K562 (cell line): ENCODE measurements at regions of chr6 and their contacts with region 1.

Region 1: DNA sequence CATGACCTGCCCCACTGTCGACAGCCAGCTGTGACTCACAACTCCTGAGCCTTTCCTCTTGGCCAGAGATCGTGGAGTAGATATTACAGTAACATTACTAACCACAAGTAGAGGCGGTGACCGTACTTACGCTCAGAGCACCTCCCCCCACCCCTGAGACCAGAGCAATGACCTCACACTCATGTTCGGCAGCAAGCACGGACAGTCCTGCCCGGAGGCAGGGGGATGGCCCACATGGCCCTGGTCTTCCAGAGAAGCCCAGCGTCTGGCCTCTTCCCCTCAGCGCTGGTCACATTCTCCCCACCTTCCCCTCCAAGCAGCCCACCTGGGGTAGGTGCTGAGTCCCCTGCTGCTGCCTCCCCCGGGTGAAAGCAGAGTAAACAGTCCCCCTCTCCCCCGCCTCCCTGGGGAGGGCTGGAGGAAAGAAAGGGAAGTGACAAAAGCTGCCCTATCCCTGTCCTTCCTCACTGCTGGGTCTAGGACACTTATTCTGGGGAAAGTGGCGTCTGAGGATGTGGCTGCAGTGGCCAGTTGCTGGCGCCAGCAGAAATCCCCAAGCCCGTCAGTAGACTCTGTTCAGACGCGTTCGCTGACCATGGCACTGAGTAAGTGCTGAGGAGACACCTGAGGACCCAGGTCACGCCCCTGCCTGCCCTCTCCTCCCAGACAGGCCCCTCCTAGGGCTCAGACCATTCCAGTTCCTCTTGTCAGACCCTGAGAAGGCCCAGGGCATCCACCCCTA is 68.5 kb downstream of the MRPL14 start:
- DNase-seq: peak; percentile 96 to 99 (median 98)
- ATAC-seq: peak; percentile 93
- H3K4me3 ChIP-seq: peak overlapping the region; percentile 21; the same call in 1 of the 2 replicates
- H3K27ac ChIP-seq: peak overlapping the region; percentile 97
- H3K4me1 ChIP-seq: peaks cover 52 to 63% of the 10 kb centered on the region in 2 experiments
- H3K27me3 ChIP-seq: no peaks in the 10 kb centered on the region
- CTCF ChIP-seq: peak in 1 of 3 experiments; percentile 19; a peak in 2 of 6 replicates
- EP300 ChIP-seq: peak; percentile 92
- POLR2A ChIP-seq: peak; percentile 87
- RAD21 ChIP-seq: peak; percentile 10 to 40; a peak in 1 of 4 replicates

Region 2: DNA sequence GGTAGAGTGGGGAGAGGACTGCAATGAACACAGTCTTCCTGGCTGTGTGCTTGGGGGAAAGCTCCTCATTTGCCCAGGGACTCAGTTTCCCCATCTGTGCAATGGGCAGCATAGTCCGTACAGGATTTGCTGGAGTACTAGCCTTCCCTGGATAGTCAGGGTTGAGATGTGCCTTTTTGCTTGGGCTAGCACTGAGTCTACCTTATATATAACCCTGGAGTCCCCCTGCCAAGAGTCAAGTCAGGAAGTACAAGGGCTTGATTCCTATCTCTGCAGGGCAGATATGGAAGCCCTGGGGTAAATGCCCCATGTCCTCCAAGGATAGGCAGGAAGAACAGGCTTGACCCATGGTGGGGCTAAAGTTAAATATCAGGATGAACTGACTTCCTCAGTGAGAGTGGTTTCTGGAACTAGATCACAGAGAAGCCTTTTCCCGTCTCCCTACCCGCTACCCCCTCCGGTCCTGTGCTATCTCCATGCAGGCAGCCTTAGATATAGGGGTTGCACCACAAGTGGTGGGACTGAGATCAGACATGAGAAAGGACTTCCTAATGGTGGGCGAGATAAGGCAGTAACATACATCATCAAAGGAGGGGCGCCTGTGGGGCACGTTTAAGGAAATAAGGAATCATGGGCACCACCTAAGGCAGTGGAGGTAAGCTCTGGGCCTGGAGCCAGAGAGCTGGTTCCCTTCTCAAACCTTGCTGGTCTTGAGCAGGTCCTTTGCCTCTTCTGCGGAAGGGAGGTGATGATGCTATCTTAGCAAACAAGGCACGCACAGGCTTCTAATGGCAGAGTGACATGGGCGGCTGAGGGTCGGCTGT is 89.4 kb before region 1 on chr6:
- CTCF ChIA-PET with region 1: no interaction called
- POLR2A ChIA-PET with region 1: interaction called, 3 read pairs
- in situ Hi-C with region 1: no loop called
- intact Hi-C with region 1: loop called (anchors 1 kb)
- DNase-seq: peak; percentile 87 to 93 (median 88)
- ATAC-seq: peak; percentile 60
- H3K4me3 ChIP-seq: no peak overlapping the region
- H3K27ac ChIP-seq: peak overlapping the region; percentile 74
- H3K4me1 ChIP-seq: peaks cover 59 to 86% of the 10 kb centered on the region in 2 experiments
- H3K27me3 ChIP-seq: no peaks in the 10 kb centered on the region
- CTCF ChIP-seq: peak in 1 of 3 experiments; percentile 7; a peak in 1 of 6 replicates
- EP300 ChIP-seq: peak; percentile 94; the same call in 1 of the 2 replicates
- POLR2A ChIP-seq: no peak
- RAD21 ChIP-seq: peak; percentile 29 to 33

Region 3: DNA sequence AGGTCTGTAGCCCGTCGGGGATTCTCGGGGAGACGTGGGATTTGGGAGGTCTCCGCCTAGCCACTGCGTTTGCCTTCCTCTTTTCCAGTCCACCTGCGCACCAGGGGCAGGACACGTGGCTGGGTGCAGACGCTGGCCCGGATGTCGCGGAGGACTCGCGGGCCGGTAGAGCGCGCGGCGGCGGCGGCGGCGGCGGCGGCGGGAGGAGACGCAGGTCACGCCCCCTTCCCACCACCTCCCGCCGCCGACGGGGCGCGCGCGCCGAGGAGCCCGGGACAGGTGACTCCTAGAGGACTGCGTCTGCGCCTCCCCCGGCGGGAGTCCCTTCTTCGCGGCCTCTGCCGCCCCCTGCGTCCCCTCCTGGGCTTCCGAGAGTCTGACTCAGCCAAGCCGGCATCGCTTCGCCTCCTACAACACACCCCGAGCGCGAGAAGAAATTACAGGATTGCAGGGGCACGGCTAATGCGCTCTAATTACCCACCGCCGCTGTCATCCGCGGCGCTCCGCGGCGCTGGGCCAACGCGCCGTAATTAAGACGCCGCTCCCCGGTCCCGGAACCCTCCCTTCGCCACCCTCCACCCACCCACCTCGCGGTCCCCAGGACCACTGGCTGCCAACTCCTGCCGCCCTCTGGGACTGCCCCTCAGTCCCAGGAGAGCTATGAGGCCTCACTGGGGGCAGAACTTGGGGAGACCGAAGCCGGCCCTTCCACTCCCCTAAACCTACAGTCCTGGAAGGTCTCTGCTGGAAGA is 56.0 kb before region 1 on chr6:
- CTCF ChIA-PET with region 1: no interaction called
- POLR2A ChIA-PET with region 1: no interaction called
- in situ Hi-C with region 1: no loop called
- intact Hi-C with region 1: loop called (anchors 2 kb)
- DNase-seq: no peak
- ATAC-seq: no peak
- H3K4me3 ChIP-seq: no peak overlapping the region
- H3K27ac ChIP-seq: no peak overlapping the region
- H3K4me1 ChIP-seq: peaks cover 27 to 31% of the 10 kb centered on the region in 2 experiments
- H3K27me3 ChIP-seq: no peaks in the 10 kb centered on the region
- CTCF ChIP-seq: no peak
- EP300 ChIP-seq: no peak
- POLR2A ChIP-seq: no peak
- RAD21 ChIP-seq: no peak

Region 4: DNA sequence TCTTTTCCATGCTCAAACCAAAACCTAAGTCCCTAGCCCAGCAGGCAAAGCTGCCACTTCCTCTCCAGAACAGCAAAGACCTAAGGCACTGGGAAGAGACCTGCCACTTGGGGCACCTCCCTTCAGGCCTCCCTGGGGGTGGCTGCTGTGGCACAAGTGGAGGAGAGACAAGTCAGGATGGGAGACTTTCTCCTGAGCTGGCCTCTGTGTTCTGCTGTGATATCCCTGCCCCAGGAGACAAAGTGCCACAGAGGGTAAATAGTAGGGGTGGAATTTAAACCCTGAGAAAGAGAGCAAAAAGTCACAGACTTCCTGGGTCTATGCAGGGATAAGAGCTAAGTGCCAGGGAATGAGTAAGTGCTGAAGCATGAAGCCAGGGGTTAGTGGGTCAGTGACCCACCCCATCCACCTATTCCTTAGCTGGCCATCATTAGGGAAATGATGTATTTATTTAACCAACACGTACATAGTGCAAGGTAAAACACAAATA is 15.8 kb before region 1 on chr6:
- CTCF ChIA-PET with region 1: no interaction called
- POLR2A ChIA-PET with region 1: interaction called, 16 read pairs
- in situ Hi-C with region 1: no loop called
- intact Hi-C with region 1: loop called (anchors 1 kb)
- DNase-seq: no peak
- ATAC-seq: no peak
- H3K4me3 ChIP-seq: no peak overlapping the region
- H3K27ac ChIP-seq: peak overlapping the region; percentile 80
- H3K4me1 ChIP-seq: peaks cover 40 to 48% of the 10 kb centered on the region in 2 experiments
- H3K27me3 ChIP-seq: no peaks in the 10 kb centered on the region; a peak in 1 of 5 replicates
- CTCF ChIP-seq: no peak
- EP300 ChIP-seq: no peak
- POLR2A ChIP-seq: no peak
- RAD21 ChIP-seq: no peak

Region 5: DNA sequence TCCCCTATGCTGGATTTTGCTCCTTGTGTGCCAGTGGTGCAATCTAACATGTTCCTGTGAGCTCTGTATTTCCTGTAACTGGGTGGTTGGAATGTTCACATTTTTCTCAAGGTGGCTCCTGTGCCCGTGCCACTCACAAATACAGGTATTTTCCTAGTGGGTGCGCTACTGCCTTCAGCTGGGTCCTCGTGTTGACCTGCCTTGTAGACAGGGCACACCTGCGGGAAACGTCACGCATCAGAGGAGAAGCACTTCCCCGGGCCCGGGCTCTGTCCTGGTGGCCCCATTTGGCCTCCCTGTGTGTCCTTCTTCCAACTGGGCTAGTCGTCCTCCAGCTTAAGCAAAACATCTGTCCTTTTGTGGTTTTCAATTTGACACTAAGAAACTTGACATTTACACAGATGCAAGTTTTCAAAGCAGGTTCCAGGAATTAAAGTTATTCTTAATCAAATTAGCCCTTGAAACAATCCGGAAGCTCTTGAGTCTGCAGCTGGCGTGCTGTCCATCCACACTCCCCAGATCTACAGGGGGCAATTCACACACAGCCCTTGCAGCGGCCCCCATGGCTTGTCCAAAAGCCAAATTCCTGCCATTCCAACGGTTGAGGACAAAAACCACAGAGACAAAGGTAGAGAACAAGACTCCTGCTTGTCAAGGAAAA is 603.8 kb after region 1 on chr6:
- CTCF ChIA-PET with region 1: no interaction called
- POLR2A ChIA-PET with region 1: no interaction called
- in situ Hi-C with region 1: no loop called
- intact Hi-C with region 1: no loop called
- DNase-seq: no peak
- ATAC-seq: no peak
- H3K4me3 ChIP-seq: no peak overlapping the region
- H3K27ac ChIP-seq: no peak overlapping the region
- H3K4me1 ChIP-seq: no peaks in the 10 kb centered on the region
- H3K27me3 ChIP-seq: peaks cover 22 to 67% of the 10 kb centered on the region in 2 experiments
- CTCF ChIP-seq: no peak
- EP300 ChIP-seq: no peak
- POLR2A ChIP-seq: no peak
- RAD21 ChIP-seq: no peak